HepG2 (cell line): ENCODE measurements at regions of chr11 and their contacts with region 1.

Region 1: DNA sequence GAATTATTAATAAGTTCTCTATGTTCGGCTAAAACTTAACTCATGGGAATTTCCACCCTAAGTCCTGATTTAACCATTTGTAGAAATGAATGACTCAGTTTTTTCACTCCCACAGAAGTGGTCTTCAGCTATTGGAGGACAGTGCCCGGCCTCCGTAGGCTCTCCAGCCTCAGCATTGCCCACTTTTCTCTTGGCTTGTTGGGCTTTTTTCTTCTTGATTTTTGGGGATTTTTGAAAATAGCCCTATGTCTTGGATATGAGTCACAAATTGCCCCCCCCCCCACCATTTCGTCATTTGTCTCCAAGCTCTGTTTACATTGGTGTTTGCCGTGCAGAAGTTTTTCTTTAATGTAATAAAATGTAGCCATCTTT is 66.7 kb downstream of the PACS1 start:
- DNase-seq: peak; percentile 37
- ATAC-seq: no peak
- H3K4me3 ChIP-seq: no peak overlapping the region
- H3K27ac ChIP-seq: no peak overlapping the region
- H3K4me1 ChIP-seq: peaks cover 38% of the 10 kb centered on the region
- H3K27me3 ChIP-seq: no peaks in the 10 kb centered on the region
- CTCF ChIP-seq: no peak
- EP300 ChIP-seq: peak in 1 of 2 experiments; percentile 16; a peak in 1 of 4 replicates
- POLR2A ChIP-seq: no peak
- RAD21 ChIP-seq: no peak

Region 2: GRCh38 chr11:65662799-65663638 is 473.7 kb before region 1 on chr11 and contains the start of gene RELA:
- CTCF ChIA-PET with region 1: no interaction called
- POLR2A ChIA-PET with region 1: no interaction called
- in situ Hi-C with region 1: no loop called
- intact Hi-C with region 1: no loop called
- DNase-seq: peak; percentile 81
- ATAC-seq: peak; percentile 84
- H3K4me3 ChIP-seq: peak within 1 kb of the TSS; percentile 81 to 94 (median 88)
- H3K27ac ChIP-seq: peak within 1 kb of the TSS; percentile 86
- H3K4me1 ChIP-seq: peaks cover 10% of the 10 kb centered on the region
- H3K27me3 ChIP-seq: no peaks in the 10 kb centered on the region; a peak in 1 of 5 replicates
- CTCF ChIP-seq: no peak
- EP300 ChIP-seq: no peak
- POLR2A ChIP-seq: peak; percentile 53 to 81
- RAD21 ChIP-seq: no peak; the same call in 1 of the 2 replicates
- total RNA-seq, gene RELA: 18.7 and 21.4 TPM in 2 replicates

Region 3: DNA sequence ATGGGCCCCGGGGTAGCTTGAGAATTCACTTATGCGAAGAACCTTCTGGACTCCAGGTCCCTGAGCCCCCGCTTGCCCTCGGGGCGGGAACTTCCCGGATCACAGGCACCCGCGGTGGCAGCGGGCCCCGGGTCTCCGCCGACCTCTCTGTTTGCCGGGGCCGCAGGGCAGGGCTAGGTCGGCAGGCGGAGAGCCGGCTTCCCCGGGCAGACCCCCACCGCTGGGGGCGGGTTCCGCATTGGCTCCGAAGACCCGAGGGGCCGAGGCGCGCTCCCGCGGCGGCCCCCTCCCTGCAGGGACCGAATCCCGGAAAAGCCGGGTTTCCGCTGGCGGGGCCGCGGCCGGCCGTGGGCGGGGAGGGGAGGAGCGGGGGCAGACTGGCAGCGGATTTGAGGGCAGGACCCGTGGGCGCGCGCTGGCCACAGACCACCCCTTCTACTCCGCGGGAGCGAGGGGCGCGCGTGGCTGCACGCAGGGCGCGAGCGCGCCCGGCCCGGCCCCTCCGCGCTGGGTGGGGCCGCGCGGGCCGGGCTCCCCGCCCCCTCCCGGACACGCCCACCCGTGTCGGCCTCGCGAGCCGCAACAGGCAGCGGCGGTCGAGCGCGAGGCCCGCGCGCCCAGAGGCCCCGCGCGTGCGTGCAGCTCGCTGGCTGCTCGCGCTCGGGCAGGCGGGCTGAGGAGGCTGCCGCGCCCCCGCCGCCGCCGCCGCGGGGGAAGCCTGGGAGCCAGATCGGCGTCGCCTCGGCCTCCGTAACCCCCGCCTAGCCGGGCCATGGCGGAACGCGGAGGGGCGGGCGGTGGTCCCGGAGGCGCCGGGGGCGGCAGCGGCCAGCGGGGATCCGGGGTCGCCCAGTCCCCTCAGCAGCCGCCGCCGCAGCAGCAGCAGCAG is 66.8 kb before region 1 on chr11 and contains the start of gene PACS1:
- CTCF ChIA-PET with region 1: interaction called, 14 read pairs
- POLR2A ChIA-PET with region 1: no interaction called
- in situ Hi-C with region 1: loop called (anchors 5 kb)
- intact Hi-C with region 1: loop called (anchors 1 kb)
- DNase-seq: peak; percentile 25
- ATAC-seq: peak; percentile 48
- H3K4me3 ChIP-seq: peak within 1 kb of the TSS; percentile 82 to 88 (median 86)
- H3K27ac ChIP-seq: peak within 1 kb of the TSS; percentile 59
- H3K4me1 ChIP-seq: peaks cover 59% of the 10 kb centered on the region
- H3K27me3 ChIP-seq: no peaks in the 10 kb centered on the region
- CTCF ChIP-seq: no peak
- EP300 ChIP-seq: no peak
- POLR2A ChIP-seq: peak in 1 of 2 experiments; percentile 46; a peak in 1 of 4 replicates
- RAD21 ChIP-seq: no peak; the same call in none of the 2 replicates
- total RNA-seq, gene PACS1: 7.6 and 12.2 TPM in 2 replicates

Region 4: GRCh38 chr11:66081505-66081904 is 55.2 kb before region 1 on chr11:
- CTCF ChIA-PET with region 1: no interaction called
- POLR2A ChIA-PET with region 1: no interaction called
- in situ Hi-C with region 1: no loop called
- intact Hi-C with region 1: loop called (anchors 5 kb)
- DNase-seq: no peak
- ATAC-seq: no peak
- H3K4me3 ChIP-seq: no peak overlapping the region
- H3K27ac ChIP-seq: no peak overlapping the region
- H3K4me1 ChIP-seq: peaks cover 49% of the 10 kb centered on the region
- H3K27me3 ChIP-seq: no peaks in the 10 kb centered on the region
- CTCF ChIP-seq: no peak
- EP300 ChIP-seq: no peak
- POLR2A ChIP-seq: no peak
- RAD21 ChIP-seq: no peak

Region 5: GRCh38 chr11:66491315-66491935 is 354.7 kb after region 1 on chr11:
- CTCF ChIA-PET with region 1: no interaction called
- POLR2A ChIA-PET with region 1: no interaction called
- in situ Hi-C with region 1: no loop called
- intact Hi-C with region 1: no loop called
- DNase-seq: no peak
- ATAC-seq: peak; percentile 80
- H3K4me3 ChIP-seq: no peak overlapping the region
- H3K27ac ChIP-seq: no peak overlapping the region
- H3K4me1 ChIP-seq: peaks cover 8% of the 10 kb centered on the region; the same call in 1 of the 2 replicates
- H3K27me3 ChIP-seq: no peaks in the 10 kb centered on the region
- CTCF ChIP-seq: 0 out of 2 replicates have a peak, but pooled peaks have one; percentile 10
- EP300 ChIP-seq: no peak
- POLR2A ChIP-seq: no peak
- RAD21 ChIP-seq: no peak